ENCODE measurements at regions of chr22 and their contacts with region 1.

Region 1: GRCh38 chr22:45645526-45646414 is 25.9 kb upstream of the ATXN10 start:
- DNase-seq: peak; percentile 73 to 89 (median 85)
- ATAC-seq: peak; percentile 99
- H3K4me3 ChIP-seq: no peak overlapping the region
- H3K4me1 ChIP-seq: no peaks in the 10 kb centered on the region
- CTCF ChIP-seq: peak; percentile 94

Region 2: DNA sequence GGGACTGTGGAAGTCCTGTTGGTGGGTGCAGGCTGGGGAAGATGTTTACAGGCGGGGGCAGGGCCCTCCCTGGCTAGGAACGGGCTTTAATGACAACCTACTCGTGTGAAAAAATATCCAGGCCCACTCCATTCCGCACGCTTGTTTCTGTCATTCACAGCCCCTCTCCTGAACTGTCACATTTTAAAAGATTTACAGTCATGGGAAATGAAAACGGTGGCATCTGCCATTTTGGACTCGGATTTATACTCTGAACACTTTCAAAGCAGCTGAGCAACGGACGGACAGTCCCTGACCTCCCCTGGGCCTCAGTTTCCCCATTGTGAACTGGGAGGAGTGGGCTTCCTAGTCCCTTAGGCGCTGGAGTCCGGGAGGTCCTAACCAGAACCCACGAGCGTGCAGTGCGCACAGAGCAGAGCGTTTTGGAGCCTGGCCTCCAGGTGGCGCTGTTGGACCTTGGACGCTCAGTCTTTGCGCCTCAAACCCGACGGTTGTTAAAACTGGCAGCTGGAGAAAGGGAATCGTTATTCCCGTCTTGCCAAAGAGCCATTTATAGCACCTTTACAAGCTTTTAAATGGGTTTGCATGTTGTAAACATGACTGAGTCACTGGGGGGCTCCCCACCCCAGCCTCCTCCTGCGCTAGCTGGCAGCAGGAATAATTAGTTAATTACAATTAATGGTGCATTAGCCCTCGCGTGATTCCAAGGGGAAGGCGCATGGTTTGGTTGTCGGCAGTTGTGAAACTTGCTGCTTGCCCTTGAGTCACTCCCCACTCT is 67.8 kb before region 1 on chr22:
- intact Hi-C with region 1: no loop called
- DNase-seq: peak; percentile 79 to 90 (median 87)
- ATAC-seq: peak; percentile 88
- H3K4me3 ChIP-seq: no peak overlapping the region
- H3K4me1 ChIP-seq: peaks cover 4% of the 10 kb centered on the region
- CTCF ChIP-seq: peak; percentile 91

Region 3: DNA sequence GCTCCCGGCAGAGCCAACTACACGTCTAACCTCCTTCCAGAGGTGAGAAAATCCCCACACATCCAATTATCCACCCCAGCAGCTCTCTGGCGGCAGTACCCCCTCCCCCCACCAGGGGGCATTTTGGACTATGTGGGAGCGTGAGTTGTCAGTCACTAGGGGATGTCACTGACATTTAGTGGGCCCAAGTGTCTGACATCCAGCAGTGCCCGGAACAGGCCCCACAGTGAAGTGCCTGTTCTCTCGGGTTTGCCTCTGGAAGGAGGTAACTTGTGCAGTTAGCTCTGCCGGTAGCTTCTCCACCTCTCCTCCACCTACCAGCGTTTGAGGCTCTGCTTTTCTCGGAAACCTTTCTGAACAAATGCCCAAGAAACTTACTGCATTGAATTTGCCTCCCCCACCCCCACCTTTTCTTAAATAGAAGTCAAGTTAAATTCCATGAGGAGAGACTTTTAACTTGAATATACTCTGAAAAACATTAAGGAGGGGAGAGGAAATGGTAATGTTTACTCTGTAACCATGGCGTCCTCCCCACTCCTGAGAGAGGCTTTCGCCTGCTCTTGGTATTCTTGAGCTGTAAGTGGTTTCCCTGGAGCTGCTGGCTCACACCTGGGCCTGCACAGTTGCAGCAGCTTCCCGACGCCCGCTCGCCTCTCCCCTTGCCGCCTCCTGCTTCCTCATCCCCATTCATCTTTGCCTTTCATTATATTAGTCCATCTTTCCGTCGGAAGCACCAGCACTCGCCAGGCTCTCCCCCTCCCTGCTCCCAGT is 218.4 kb after region 1 on chr22:
- intact Hi-C with region 1: loop called in 1 of 2 experiments (anchors 10 kb)
- DNase-seq: peak in 2 of 3 donors; percentile 78 to 82
- ATAC-seq: peak; percentile 67
- H3K4me3 ChIP-seq: no peak overlapping the region
- H3K4me1 ChIP-seq: peaks cover 14% of the 10 kb centered on the region
- CTCF ChIP-seq: peak; percentile 95

Region 4: DNA sequence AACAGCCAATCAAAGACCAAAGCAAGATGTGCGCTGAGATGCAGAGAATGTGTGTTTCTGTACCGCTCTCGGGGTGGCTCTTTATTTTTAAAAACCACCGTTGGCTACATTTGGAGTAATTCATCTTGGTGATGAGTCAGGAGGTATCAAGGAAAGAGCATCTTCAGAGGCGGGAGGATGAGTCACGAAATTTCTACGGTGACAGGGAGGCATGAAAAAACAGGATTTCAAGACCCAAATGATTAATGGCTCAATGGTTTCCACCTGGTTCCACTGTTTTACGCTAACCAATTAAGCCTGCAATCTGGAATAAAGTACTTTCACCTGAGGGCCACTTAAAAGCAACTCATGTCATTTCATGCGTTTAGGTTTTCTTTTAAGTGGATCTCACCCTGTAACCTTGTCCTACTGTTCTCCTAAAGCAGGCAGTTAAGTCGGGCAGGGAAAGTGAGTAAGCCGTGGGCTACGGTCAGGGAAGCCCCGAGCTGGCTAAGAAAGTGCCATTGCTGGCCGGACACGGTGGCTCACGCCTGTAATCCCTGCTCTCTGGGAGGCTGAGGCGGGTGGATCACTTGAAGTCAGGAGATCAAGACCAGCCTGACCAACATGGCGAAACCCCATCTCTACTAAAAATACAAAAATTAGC is 817.1 kb after region 1 on chr22:
- intact Hi-C with region 1: no loop called
- DNase-seq: no peak
- ATAC-seq: no peak
- H3K4me3 ChIP-seq: no peak overlapping the region
- H3K4me1 ChIP-seq: no peaks in the 10 kb centered on the region
- CTCF ChIP-seq: no peak

Measured in mucosa of descending colon (tissue), 3 donors.